ENCODE measurements at regions of chr9 and their contacts with region 1.

Region 1: GRCh38 chr9:68779558-68780384 is 74.7 kb downstream of the PIP5K1B start:
- DNase-seq: peak; percentile 98
- H3K4me3 ChIP-seq: peak overlapping the region; percentile 65 to 82 (median 72)
- H3K27ac ChIP-seq: peak overlapping the region; percentile 86 to 94 (median 91)
- H3K4me1 ChIP-seq: peaks cover 39 to 53% (median 49%) of the 10 kb centered on the region in 4 donors
- H3K27me3 ChIP-seq: no peaks in the 10 kb centered on the region
- CTCF ChIP-seq: peak; percentile 11 to 44 (median 39)
- EP300 ChIP-seq: no peak
- POLR2A ChIP-seq: peak; percentile 48

Region 2: DNA sequence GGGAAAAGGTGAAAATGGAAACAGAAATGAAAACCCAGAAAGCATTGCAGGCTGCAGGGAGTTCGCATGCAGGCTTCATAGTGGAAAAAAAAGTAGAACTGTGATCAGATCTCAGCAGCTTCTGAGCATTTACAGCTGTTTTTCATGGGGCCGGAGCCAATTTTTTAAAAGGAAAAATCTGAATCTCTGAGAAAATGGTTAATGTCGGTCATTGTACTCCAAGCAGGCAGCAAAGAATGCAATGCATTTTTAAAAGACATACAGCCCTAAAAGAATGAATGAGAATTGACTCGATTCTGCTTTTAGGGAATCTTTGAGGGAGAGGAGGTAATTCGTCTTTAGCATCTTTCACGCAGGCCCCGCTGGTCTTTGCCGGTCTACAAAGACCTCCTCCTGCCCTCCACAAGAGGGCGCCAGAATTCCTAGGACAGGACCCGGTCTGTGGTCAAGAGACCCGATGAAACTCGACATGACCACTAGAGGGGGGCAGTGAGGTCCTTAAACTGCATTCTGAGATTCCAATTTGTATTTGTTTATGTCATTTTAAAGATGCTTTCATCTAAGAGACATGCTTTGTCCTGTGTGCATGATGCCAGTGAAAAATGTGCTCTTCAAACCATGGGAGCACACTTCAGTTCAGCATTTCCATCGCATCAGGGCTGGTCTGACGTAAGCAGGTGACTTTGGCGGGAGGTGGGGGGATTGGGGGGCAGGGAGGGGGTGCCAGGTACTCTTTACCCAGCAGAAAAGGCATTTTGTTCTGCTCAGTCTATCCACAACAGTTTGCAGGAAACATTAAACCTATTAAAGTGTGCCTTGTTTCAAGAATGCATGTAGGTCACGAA is 195.4 kb before region 1 on chr9:
- intact Hi-C with region 1: loop called (anchors 10 kb)
- DNase-seq: no peak
- H3K4me3 ChIP-seq: peak overlapping the region in 1 of 4 donors; percentile 6
- H3K27ac ChIP-seq: peak overlapping the region in 2 of 4 donors; percentile 3 to 31
- H3K4me1 ChIP-seq: peaks cover 0 to 7% (median 3%) of the 10 kb centered on the region in 4 donors
- H3K27me3 ChIP-seq: no peaks in the 10 kb centered on the region
- CTCF ChIP-seq: peak; percentile 98
- EP300 ChIP-seq: no peak
- POLR2A ChIP-seq: no peak

Region 3: GRCh38 chr9:68704814-68705530 is 74.8 kb before region 1 on chr9 and contains the start of gene PIP5K1B:
- intact Hi-C with region 1: no loop called
- DNase-seq: peak; percentile 74
- H3K4me3 ChIP-seq: peak within 1 kb of the TSS; percentile 66 to 83 (median 69)
- H3K27ac ChIP-seq: peak within 1 kb of the TSS; percentile 38 to 70 (median 56)
- H3K4me1 ChIP-seq: peaks cover 0 to 30% (median 26%) of the 10 kb centered on the region in 4 donors
- H3K27me3 ChIP-seq: peaks cover 0 to 44% (median 9%) of the 10 kb centered on the region in 4 donors
- CTCF ChIP-seq: no peak
- EP300 ChIP-seq: no peak
- POLR2A ChIP-seq: no peak
- total RNA-seq, gene PIP5K1B: 0.42 to 1.7 (median 1.2) TPM